Mammary epithelial cell (primary cell): ENCODE measurements at regions of chr12 and their contacts with region 1.

Region 1: DNA sequence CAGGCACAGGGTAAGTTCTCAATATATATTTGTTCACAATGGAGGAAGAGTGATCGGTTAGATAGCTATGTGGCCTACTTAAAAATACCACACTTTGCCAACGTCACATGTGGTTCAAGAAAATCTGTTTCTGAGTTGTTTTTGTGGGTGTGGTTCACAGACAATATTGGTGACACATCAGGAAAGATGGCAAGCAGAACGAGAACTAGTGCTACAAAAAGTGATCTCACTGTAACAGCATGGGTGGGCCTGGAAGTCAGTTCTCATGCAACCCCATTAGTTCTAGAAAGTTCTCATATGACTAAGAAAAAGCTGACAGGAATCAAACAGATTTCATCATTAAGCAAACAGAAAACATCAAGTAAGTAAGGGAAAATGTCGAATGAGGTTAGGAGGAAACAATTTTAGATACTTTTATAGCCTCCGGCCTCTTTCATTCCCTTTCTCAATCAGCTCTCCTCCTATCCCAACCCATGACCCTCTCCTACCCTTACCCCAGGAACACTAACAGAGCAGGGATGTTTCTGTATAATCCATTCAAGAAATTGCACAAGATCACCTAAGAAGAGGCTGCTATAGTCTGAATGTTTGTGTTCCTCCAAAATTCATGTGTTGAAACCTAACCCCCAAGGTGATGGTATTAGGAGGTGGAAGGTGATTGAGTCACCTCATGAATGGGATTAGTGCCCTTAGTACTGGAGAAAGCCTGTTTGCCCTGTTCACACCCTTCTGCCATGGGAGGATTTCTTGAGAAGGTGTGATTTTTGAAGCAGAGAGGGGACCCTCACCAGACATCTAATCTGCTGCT is 15.5 kb upstream of the NTN4 start:
- DNase-seq: peak; percentile 99
- H3K4me3 ChIP-seq: no peak overlapping the region
- H3K27ac ChIP-seq: peak overlapping the region; percentile 94
- H3K4me1 ChIP-seq: peaks cover 31% of the 10 kb centered on the region
- H3K27me3 ChIP-seq: no peaks in the 10 kb centered on the region
- CTCF ChIP-seq: no peak

Region 2: GRCh38 chr12:95582230-95583058 is 223.6 kb before region 1 on chr12:
- CTCF ChIA-PET with region 1: no interaction called
- dilution Hi-C with region 1: no loop called
- in situ Hi-C with region 1: loop called (anchors 5 to 25 kb)
- intact Hi-C with region 1: no loop called
- DNase-seq: peak; percentile 23
- H3K4me3 ChIP-seq: no peak overlapping the region
- H3K27ac ChIP-seq: no peak overlapping the region
- H3K4me1 ChIP-seq: no peaks in the 10 kb centered on the region
- H3K27me3 ChIP-seq: no peaks in the 10 kb centered on the region
- CTCF ChIP-seq: peak; percentile 45 to 53

Region 3: DNA sequence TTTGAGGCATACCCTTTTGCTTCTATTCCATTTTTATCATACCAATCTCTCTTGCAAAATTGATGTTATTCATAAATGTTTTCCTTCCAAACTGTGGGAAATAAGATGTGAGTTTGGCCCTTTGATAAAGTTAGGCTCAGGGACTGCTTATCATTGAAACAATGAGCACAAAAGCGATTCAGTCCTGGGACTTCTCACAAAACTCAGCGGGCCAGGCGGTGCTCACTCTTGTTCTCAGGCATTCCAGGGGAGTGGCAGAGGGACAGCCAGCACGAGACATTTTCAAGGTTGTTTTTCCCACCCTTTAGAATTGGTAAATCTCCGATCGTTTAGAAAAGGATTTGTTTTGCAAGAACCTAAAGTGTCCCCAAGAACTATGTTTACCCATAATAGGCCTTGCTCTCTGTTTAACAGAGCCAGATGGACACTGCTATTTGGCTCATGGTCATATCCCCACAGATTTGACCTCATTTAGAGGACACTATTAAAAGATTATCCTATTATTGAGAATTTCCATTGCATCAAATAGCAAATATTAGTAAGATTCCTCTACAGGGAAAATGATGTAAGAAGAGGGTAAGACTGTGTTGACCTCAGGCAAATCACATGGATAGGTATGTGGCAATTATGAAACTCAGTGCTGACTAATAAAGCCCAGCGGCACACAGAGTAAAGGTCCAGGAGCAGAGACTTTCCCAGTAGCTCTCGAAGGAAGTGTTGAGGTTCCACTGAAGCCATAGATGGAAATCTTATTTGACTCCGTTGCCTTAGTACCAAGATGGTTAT is 152.1 kb before region 1 on chr12:
- CTCF ChIA-PET with region 1: no interaction called
- dilution Hi-C with region 1: no loop called
- in situ Hi-C with region 1: no loop called
- intact Hi-C with region 1: loop called (anchors 2 kb)
- DNase-seq: peak; percentile 93
- H3K4me3 ChIP-seq: no peak overlapping the region
- H3K27ac ChIP-seq: peak overlapping the region; percentile 80
- H3K4me1 ChIP-seq: peaks cover 22% of the 10 kb centered on the region
- H3K27me3 ChIP-seq: no peaks in the 10 kb centered on the region
- CTCF ChIP-seq: no peak

Region 4: GRCh38 chr12:95763809-95764253 is 42.2 kb before region 1 on chr12:
- CTCF ChIA-PET with region 1: no interaction called
- dilution Hi-C with region 1: no loop called
- in situ Hi-C with region 1: no loop called
- intact Hi-C with region 1: loop called (anchors 2 kb)
- DNase-seq: peak; percentile 91
- H3K4me3 ChIP-seq: no peak overlapping the region
- H3K27ac ChIP-seq: peak overlapping the region; percentile 11
- H3K4me1 ChIP-seq: peaks cover 17% of the 10 kb centered on the region
- H3K27me3 ChIP-seq: no peaks in the 10 kb centered on the region
- CTCF ChIP-seq: no peak

Region 5: GRCh38 chr12:95790033-95790911 is 15.8 kb before region 1 on chr12 and contains the start of gene NTN4:
- CTCF ChIA-PET with region 1: interaction called, 6 read pairs
- dilution Hi-C with region 1: no loop called
- in situ Hi-C with region 1: no loop called
- intact Hi-C with region 1: loop called (anchors 1 kb)
- DNase-seq: peak; percentile 54
- H3K4me3 ChIP-seq: peak within 1 kb of the TSS; percentile 73 to 79 (median 78)
- H3K27ac ChIP-seq: peak within 1 kb of the TSS; percentile 58
- H3K4me1 ChIP-seq: peaks cover 29% of the 10 kb centered on the region
- H3K27me3 ChIP-seq: no peaks in the 10 kb centered on the region
- CTCF ChIP-seq: no peak
- total RNA-seq, gene NTN4: 38.6 to 47.2 TPM

Region 6: GRCh38 chr12:96194971-96195844 is 389.1 kb after region 1 on chr12:
- CTCF ChIA-PET with region 1: no interaction called
- dilution Hi-C with region 1: no loop called
- in situ Hi-C with region 1: no loop called
- intact Hi-C with region 1: loop called (anchors 5 kb)
- DNase-seq: peak; percentile 84
- H3K4me3 ChIP-seq: peak overlapping the region; percentile 95 to 99 (median 98)
- H3K27ac ChIP-seq: peak overlapping the region; percentile 99
- H3K4me1 ChIP-seq: peaks cover 30% of the 10 kb centered on the region
- H3K27me3 ChIP-seq: no peaks in the 10 kb centered on the region
- CTCF ChIP-seq: no peak